Tibial artery (tissue), 4 donors: ENCODE measurements at regions of chr19 and their contacts with region 1.

Region 1: DNA sequence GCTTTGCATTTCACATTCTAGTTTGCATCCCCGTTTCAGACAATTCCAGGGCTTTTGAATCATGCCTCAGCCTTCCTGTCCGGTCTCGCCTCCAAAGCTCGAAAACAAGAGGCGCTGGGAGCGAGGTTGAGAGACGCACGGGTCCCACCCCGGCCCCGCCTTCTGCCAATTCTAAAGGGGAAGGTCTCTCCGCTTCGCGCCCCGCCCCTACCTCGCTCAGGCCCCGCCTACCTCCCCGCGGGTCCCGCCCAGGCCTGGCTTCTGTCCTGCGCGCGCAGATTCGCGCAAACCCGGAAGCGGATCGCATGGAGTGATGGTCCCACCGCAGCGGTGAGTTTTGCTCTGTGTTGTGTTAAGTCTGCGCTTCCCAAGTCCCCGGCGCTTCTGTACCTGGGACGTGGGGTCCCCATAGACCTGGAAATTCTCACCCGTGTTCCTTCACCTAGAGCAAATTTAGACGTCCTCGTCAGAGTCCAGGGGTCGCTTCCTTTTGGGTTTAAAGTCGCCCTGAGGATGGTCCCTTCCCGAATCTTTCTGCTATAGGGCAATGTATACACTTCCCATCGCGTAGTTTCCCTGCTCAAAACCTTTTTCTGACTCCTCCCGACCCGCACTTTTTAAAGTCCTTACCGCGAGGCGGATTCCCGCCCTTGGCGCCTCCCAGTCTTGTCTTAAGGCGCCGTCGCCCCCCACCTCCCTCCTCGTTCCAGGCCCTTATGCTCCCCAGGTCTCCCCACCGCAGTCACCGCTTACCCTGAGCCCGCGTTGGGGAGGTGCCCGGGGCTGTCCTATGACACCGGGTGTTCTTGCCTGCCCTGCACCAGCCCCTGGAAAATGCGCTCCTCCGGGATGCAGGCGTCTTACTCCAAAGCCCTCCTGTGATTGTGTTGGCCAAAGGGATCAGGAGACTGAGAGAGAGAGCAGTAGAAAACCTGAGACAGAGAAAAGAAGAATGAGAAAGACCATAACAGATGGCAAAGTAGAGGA is at the start of gene ZNF845:
- DNase-seq: peak; percentile 93 to 96
- H3K4me3 ChIP-seq: peak within 1 kb of the TSS; percentile 64 to 67
- H3K27ac ChIP-seq: peak within 1 kb of the TSS; percentile 78 to 86
- H3K4me1 ChIP-seq: peaks cover 0 to 13% (median 8%) of the 10 kb centered on the region in 4 donors
- H3K27me3 ChIP-seq: no peaks in the 10 kb centered on the region
- CTCF ChIP-seq: no peak

Region 2: GRCh38 chr19:53254411-53255341 is 79.1 kb before region 1 on chr19 and contains the start of gene ZNF677:
- intact Hi-C with region 1: loop called (anchors 10 kb)
- DNase-seq: peak; percentile 90 to 96
- H3K4me3 ChIP-seq: peak within 1 kb of the TSS; percentile 78 to 81
- H3K27ac ChIP-seq: peak within 1 kb of the TSS; percentile 81 to 89
- H3K4me1 ChIP-seq: peaks cover 0 to 15% (median 10%) of the 10 kb centered on the region in 4 donors
- H3K27me3 ChIP-seq: no peaks in the 10 kb centered on the region
- CTCF ChIP-seq: no peak

Region 3: DNA sequence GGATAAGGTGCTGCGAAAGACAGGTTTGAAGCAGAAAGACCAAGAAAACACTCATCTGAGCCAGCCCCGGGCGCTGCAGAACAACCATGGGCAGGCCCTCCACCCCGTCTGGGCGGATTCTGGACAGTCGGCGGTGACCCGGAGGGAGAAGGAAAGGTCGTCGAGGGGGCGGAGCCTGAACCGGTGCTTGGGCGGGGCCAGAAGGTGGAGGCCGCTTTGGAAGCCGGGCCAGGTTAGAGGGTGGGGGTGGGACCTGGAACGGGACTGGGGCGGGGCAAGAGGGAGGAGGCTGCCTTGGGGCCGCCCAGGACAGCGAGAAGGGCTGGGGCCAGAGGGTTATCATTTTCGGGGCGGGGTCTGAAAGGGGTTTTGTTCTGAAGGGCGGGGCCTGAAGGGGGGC is 56.2 kb after region 1 on chr19:
- intact Hi-C with region 1: loop called (anchors 10 kb)
- DNase-seq: no peak
- H3K4me3 ChIP-seq: no peak overlapping the region
- H3K27ac ChIP-seq: no peak overlapping the region
- H3K4me1 ChIP-seq: peaks cover 5 to 9% (median 7%) of the 10 kb centered on the region in 4 donors
- H3K27me3 ChIP-seq: no peaks in the 10 kb centered on the region
- CTCF ChIP-seq: no peak